ENCODE measurements at regions of chr1 and their contacts with region 1.

Region 1: GRCh38 chr1:1236945-1237873 is 5.2 kb downstream of the B3GALT6 start:
- DNase-seq: peak; percentile 58 to 61
- H3K4me3 ChIP-seq: peak overlapping the region; percentile 43
- H3K27ac ChIP-seq: peak overlapping the region; percentile 75
- H3K4me1 ChIP-seq: peaks cover 56% of the 10 kb centered on the region
- H3K27me3 ChIP-seq: no peaks in the 10 kb centered on the region
- CTCF ChIP-seq: no peak

Region 2: DNA sequence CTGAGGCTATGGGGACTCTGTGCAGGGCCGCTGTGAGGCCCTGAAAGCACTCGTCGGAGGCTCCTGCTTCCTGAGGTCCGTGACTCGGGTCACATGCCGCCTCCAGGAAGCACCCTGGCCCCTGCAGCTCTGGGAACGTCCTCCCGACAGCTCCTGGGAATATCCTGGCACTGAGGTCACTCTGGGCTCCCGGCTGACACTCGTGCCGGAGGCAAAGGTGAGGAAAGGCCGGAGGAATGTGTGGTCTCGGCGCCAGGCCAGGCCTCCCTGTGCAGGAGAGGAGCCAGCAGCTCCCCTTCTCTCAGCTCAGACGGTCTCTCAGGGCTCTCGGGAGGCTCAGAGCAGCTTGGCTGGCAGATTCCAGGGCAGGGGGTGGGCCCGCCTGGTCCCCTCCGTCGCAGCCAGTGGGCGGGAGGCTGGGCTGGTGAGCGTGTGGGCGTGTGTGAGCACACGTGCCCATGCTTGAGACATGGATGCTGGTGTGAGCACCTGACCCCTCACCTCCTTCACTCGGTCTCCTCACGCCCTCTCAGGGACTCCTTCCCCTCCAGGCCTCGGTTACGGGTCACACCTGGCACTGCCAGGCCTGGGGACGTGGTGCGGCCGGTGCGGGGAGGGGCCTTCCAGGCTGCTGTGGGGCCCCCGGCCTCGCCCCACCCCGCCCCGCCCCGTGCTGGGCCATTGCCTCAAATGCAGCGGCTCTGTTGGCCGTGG is 157.6 kb before region 1 on chr1:
- CTCF ChIA-PET with region 1: no interaction called
- POLR2A ChIA-PET with region 1: no interaction called
- intact Hi-C with region 1: no loop called
- DNase-seq: peak; percentile 96
- H3K4me3 ChIP-seq: peak overlapping the region; percentile 55
- H3K27ac ChIP-seq: peak overlapping the region; percentile 93
- H3K4me1 ChIP-seq: peaks cover 20% of the 10 kb centered on the region
- H3K27me3 ChIP-seq: no peaks in the 10 kb centered on the region
- CTCF ChIP-seq: no peak

Region 3: DNA sequence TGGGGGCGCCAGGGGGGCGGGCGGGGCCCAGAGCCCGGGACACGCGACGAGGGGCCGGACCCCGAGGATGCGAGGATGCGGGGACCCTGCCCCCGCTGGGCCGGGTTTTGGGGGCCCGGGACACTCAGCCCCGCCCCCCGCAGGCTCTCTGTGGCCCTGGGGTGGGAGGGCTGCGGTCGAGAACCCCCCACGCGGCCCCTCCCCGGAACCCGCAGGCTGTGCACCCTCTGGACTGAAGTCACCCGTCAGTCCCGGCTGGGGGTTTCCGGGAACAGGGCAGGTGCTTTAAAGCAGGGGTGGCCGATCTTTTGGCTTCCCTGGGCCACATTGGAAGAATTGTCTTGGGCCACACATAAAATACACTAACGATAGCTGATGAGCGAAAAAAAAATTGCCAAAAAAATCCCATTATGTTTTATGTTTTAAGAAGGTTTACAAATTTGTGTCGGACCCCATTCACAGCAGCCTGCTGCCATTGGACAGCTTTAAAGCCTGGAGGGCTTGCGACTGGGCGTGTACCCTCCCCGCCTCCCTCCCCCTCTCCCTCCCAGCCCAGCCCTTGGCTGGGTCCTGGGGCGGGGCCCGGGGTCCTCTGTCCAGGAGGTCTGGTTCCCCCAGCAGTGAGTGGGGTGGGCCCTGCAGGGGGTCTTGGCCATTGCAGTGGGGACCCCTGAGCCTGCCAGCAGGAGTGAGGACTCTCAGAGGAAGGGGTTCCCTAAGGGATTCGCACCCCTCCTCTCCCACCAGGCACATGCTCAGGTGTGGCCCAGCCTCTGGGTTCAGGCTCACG is 99.8 kb before region 1 on chr1:
- CTCF ChIA-PET with region 1: interaction called, 10 read pairs
- POLR2A ChIA-PET with region 1: interaction called, 3 read pairs
- intact Hi-C with region 1: no loop called
- DNase-seq: no peak
- H3K4me3 ChIP-seq: peak overlapping the region; percentile 55; the same call in 1 of the 2 replicates
- H3K27ac ChIP-seq: no peak overlapping the region
- H3K4me1 ChIP-seq: peaks cover 31% of the 10 kb centered on the region
- H3K27me3 ChIP-seq: no peaks in the 10 kb centered on the region
- CTCF ChIP-seq: no peak

Region 4: GRCh38 chr1:1299686-1300362 is 62.6 kb after region 1 on chr1:
- CTCF ChIA-PET with region 1: no interaction called
- POLR2A ChIA-PET with region 1: no interaction called
- intact Hi-C with region 1: no loop called
- DNase-seq: no peak
- H3K4me3 ChIP-seq: no peak overlapping the region
- H3K27ac ChIP-seq: no peak overlapping the region
- H3K4me1 ChIP-seq: peaks cover 4% of the 10 kb centered on the region
- H3K27me3 ChIP-seq: no peaks in the 10 kb centered on the region
- CTCF ChIP-seq: peak; percentile 62

Region 5: DNA sequence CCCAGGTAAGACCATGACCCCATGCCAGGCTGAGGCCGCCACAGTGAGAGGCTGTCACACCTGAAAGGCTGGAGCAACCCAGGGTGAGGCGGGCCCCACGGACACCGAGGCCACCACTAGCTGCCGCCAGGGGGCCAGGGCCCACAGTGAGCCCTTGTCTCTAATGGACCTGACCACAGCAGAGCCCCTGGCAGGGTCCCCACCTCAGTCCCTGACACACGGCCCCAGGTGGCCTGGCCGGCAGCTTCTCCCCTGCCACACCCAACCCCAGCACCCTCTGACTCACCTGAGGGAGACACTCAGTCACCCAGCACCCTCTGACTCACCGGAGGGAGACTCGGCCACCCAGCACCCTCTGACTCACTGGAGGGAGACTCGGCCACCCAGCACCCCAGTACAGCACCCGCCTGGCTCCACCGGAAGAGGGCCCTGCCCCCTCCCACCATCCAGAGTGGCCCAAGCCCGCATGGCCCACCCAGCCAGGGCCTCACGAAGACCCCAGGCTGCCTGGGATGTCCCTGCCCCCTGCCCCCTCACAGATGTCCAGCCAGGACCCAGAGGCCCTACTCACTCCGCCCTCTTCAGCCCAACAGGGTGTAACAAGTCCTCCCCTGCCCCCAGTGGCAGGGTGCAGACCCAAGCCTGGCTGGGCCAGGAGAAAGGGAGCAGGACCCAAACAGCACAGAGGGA is 107.6 kb after region 1 on chr1:
- CTCF ChIA-PET with region 1: no interaction called
- POLR2A ChIA-PET with region 1: no interaction called
- intact Hi-C with region 1: no loop called
- DNase-seq: peak; percentile 96 to 98
- H3K4me3 ChIP-seq: peak overlapping the region; percentile 85; the same call in 1 of the 2 replicates
- H3K27ac ChIP-seq: peak overlapping the region; percentile 92
- H3K4me1 ChIP-seq: peaks cover 51% of the 10 kb centered on the region
- H3K27me3 ChIP-seq: no peaks in the 10 kb centered on the region
- CTCF ChIP-seq: peak; percentile 79

Region 6: GRCh38 chr1:1358433-1359261 is 121.4 kb after region 1 on chr1 and contains the start of gene MXRA8:
- CTCF ChIA-PET with region 1: no interaction called
- POLR2A ChIA-PET with region 1: no interaction called
- intact Hi-C with region 1: no loop called
- DNase-seq: peak in 1 of 2 experiments; percentile 27
- H3K4me3 ChIP-seq: no peak within 1 kb of the TSS
- H3K27ac ChIP-seq: no peak within 1 kb of the TSS
- H3K4me1 ChIP-seq: peaks cover 24% of the 10 kb centered on the region
- H3K27me3 ChIP-seq: no peaks in the 10 kb centered on the region
- CTCF ChIP-seq: no peak
- total RNA-seq, gene MXRA8: 0.55 and 0.80 TPM in 2 replicates

Measured in PC-9 (cell line).